A549 (cell line): ENCODE measurements at regions of chr9 and their contacts with region 1.

Region 1: DNA sequence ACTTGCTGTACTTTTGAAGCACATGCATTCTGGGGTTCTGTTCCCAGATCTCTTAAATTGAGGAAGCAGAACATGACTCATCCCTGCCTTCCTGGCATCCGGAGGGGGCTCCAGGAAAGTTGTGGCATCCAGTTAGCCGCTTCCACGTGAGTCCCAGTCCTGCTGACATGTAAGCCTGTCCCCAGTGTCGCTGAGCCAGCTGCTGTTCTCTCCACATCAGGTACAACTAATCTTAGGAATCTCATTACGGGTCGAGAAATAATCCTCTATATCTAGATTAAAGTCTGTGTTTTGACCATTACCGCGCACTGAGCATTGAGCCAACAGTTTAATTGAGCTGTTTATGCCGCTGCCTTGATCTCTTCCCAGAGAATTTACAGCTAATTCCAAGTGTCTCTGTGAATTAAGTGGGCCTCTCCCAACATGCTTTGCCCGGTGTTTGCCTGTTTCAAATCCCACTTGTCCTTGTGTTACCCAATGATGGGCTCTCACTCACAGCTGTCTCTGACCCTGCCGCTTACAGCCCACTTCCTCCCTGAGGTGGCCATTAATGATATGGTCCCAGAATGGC is 10.5 kb upstream of the SHB start:
- DNase-seq: no peak
- ATAC-seq: no peak
- H3K4me3 ChIP-seq: no peak overlapping the region
- H3K27ac ChIP-seq: no peak overlapping the region
- H3K4me1 ChIP-seq: no peaks in the 10 kb centered on the region
- CTCF ChIP-seq: no peak
- EP300 ChIP-seq: no peak
- POLR2A ChIP-seq: no peak
- RAD21 ChIP-seq: no peak

Region 2: DNA sequence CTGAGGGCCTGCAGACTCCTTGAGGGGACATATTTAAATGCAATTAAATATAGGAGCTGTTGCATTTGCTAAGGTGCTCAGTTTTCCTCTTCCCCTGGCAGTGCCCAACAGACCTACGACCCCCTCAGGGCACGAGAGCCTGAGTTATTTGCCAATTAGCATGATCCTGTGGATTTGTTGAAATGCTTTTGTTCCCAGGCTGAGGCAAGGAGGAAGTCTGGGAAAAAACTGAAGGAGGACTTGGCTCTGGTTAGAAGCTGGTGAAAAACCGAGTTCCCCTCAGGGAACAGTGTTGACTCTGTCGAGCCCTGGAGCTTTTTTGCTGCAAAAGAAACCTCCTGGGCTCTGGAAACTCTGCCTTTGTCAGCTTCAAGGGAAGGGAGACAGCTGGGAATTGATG is 93.0 kb after region 1 on chr9:
- CTCF ChIA-PET with region 1: no interaction called
- POLR2A ChIA-PET with region 1: no interaction called
- DNase-seq: no peak
- ATAC-seq: no peak
- H3K4me3 ChIP-seq: no peak overlapping the region
- H3K27ac ChIP-seq: peak overlapping the region; percentile 26 to 85; a peak in 5 of 6 replicates
- H3K4me1 ChIP-seq: 0 out of 3 replicates have a peak, but pooled peaks cover 4% of the 10 kb centered on the region
- CTCF ChIP-seq: no peak
- EP300 ChIP-seq: no peak
- POLR2A ChIP-seq: no peak
- RAD21 ChIP-seq: no peak

Region 3: DNA sequence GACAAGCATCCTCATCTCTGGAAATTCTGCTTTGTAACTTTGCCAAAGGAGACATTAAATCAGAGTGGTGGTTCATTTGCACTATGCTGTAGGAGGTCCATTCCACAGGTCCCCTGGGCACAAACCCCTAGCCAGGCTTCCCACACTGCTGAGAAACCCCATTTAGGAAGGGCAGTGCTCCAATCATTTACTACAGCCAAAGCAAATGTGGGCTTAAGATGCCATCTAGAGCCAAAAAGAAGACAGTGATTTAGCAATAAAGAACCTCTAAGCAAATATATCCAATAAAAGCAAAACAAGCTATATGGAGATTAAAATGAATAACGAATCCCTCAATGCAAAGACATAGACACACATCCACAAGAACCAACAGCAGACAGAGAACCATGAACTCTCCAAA is 184.0 kb after region 1 on chr9:
- CTCF ChIA-PET with region 1: interaction called, 10 read pairs
- POLR2A ChIA-PET with region 1: no interaction called
- DNase-seq: peak in 1 of 2 experiments; percentile 49
- ATAC-seq: peak; percentile 56 to 64; a peak in 5 of 6 replicates
- H3K4me3 ChIP-seq: no peak overlapping the region
- H3K27ac ChIP-seq: peak overlapping the region in 1 of 2 experiments; percentile 14; a peak in 1 of 6 replicates
- H3K4me1 ChIP-seq: no peaks in the 10 kb centered on the region
- CTCF ChIP-seq: peak; percentile 56
- EP300 ChIP-seq: no peak
- POLR2A ChIP-seq: no peak
- RAD21 ChIP-seq: peak; percentile 80 to 82

Region 4: DNA sequence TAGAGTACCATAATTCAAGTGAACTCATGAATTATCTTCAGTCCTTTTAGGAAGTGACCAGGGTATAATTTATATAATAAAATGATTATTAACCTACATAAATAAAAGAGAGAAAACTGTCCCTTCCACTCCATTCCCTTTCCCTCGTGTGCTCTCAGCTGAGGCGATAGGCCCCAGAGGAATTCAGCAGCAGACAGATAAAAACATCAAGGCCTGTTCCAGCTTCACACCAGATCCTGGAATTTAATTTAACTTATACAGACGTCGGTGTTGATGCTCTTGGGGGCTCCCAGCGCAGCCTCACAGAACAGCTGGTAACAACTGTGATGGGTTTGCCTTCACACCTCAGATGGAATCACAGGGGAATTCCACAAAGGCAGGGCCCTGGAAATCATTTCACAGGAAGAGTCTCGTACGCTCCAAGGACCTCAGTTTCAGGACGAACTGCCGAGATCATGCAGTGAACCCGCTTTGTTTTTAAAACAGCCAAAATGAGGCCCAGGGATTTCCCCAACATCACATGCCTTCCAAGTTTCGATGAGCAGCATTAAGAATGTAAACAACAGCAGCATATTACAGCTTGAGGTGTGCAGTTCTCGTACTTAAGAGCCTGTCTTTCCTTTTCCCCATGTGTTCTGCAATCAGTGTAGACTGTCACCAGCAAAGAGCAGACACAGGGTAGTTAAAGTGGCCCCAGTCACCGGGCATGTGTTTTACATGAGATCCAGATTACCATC is 239.4 kb after region 1 on chr9:
- CTCF ChIA-PET with region 1: no interaction called
- POLR2A ChIA-PET with region 1: no interaction called
- DNase-seq: peak in 1 of 2 experiments; percentile 10
- ATAC-seq: peak; percentile 46 to 64; a peak in 3 of 6 replicates
- H3K4me3 ChIP-seq: no peak overlapping the region
- H3K27ac ChIP-seq: peak overlapping the region in 1 of 2 experiments; percentile 40; a peak in 3 of 6 replicates
- H3K4me1 ChIP-seq: peaks cover 12% of the 10 kb centered on the region
- CTCF ChIP-seq: no peak
- EP300 ChIP-seq: no peak
- POLR2A ChIP-seq: no peak
- RAD21 ChIP-seq: no peak